Heart left ventricle (tissue), 16 donors: ENCODE measurements at regions of chr2 and their contacts with region 1.

Region 1: DNA sequence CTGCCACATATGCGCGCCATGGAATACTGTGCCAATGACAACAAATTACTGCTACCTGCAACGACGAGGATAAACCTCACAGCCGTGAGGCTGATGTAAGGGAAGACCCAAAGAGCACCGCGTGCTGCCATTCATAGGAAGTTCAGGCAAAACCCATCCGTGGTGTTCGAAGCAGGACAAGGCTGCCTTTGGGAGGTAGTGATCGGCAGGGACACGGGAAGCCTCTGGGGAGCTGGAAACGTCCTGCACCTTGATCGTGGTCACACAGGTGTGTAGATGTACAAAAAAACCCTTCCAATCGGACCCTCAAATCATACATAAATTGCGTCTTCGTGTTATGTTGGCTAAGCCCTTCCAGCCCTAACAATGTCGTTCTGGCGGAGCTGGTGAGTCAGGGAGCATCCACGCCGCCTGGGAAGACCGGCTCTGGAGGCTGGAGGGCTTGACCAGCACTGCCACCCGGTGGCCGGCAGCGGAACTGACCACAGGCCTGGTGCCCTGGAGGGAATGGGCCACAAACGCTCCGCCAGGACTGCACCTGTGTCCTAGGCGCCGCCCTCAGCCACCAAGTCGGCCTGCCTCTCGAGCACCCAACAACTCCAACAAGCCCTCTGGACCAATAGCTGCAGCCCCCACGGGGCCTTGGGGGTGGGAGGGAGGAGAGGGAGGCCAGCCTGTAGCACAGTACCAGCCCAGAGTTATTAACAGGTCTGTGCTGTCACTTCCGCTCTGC is 4.1 kb upstream of the NEURL3 start:
- DNase-seq: peak; percentile 86 to 94 (median 90)
- ATAC-seq: peak; percentile 81 to 93 (median 92)
- H3K4me3 ChIP-seq: no peak overlapping the region
- H3K27ac ChIP-seq: no peak overlapping the region
- H3K4me1 ChIP-seq: peaks cover 0 to 21% (median 14%) of the 10 kb centered on the region in 12 donors
- H3K27me3 ChIP-seq: no peaks in the 10 kb centered on the region
- CTCF ChIP-seq: peak; percentile 96 to 100 (median 98)
- POLR2A ChIP-seq: no peak

Region 2: GRCh38 chr2:96138179-96139145 is 370.8 kb before region 1 on chr2 and contains the start of gene ASTL:
- intact Hi-C with region 1: loop called in 9 of 10 experiments (anchors 5 to 10 kb)
- DNase-seq: peak in 3 of 5 donors; percentile 41 to 68 (median 47)
- ATAC-seq: peak; percentile 65 to 76 (median 68)
- H3K4me3 ChIP-seq: no peak within 1 kb of the TSS
- H3K27ac ChIP-seq: no peak within 1 kb of the TSS
- H3K4me1 ChIP-seq: peaks cover 0 to 9% (median 0%) of the 10 kb centered on the region in 12 donors
- H3K27me3 ChIP-seq: peaks cover 0 to 9% (median 0%) of the 10 kb centered on the region in 9 donors
- CTCF ChIP-seq: peak; percentile 38 to 61 (median 50)
- POLR2A ChIP-seq: no peak
- total RNA-seq, gene ASTL: not detected

Region 3: GRCh38 chr2:96305091-96305978 is 203.9 kb before region 1 on chr2 and contains the start of gene SNRNP200:
- intact Hi-C with region 1: loop called in 7 of 10 experiments (anchors 1 to 10 kb)
- DNase-seq: peak; percentile 88 to 94 (median 90)
- ATAC-seq: peak; percentile 96 to 100 (median 100)
- H3K4me3 ChIP-seq: peak within 1 kb of the TSS; percentile 66 to 98 (median 82)
- H3K27ac ChIP-seq: peak within 1 kb of the TSS; percentile 64 to 94 (median 89)
- H3K4me1 ChIP-seq: peaks cover 0 to 31% (median 19%) of the 10 kb centered on the region in 12 donors
- H3K27me3 ChIP-seq: no peaks in the 10 kb centered on the region
- CTCF ChIP-seq: no peak
- POLR2A ChIP-seq: peak in 1 of 2 donors; percentile 80
- total RNA-seq, gene SNRNP200: 54.6 to 85.5 (median 66.6) TPM

Region 4: DNA sequence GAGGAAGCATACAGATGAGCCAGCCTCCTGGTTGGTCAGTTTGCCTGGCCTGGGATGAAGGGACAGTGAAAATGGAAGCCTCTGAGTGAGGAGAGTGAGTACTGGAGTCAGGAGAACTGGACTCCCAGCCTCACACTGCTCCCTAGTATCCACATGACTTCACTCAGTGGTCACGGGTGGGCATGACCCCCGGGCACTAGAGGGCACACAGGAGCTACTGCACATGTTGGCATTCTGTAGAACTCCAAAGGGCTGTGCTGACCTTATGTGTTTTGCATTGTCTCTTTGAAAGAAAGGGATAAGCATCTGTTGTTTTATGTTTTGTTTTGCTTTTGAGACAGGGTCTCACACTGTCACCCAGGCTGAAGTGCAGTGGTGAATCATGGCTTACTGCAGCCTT is 150.0 kb before region 1 on chr2:
- intact Hi-C with region 1: loop called in 1 of 10 experiments (anchors 2 kb)
- DNase-seq: peak in 1 of 5 donors; percentile 52
- ATAC-seq: peak in 3 of 4 donors; percentile 57 to 64 (median 59)
- H3K4me3 ChIP-seq: no peak overlapping the region
- H3K27ac ChIP-seq: no peak overlapping the region
- H3K4me1 ChIP-seq: peaks cover 0 to 17% (median 2%) of the 10 kb centered on the region in 12 donors
- H3K27me3 ChIP-seq: no peaks in the 10 kb centered on the region
- CTCF ChIP-seq: peak in 7 of 12 donors; percentile 15 to 49 (median 29)
- POLR2A ChIP-seq: no peak

Region 5: GRCh38 chr2:96470636-96471035 is 38.6 kb before region 1 on chr2:
- intact Hi-C with region 1: loop called (anchors 1 to 5 kb)
- DNase-seq: peak; percentile 50 to 86 (median 57)
- ATAC-seq: peak; percentile 20 to 92 (median 90)
- H3K4me3 ChIP-seq: peak overlapping the region in 11 of 12 donors; percentile 22 to 51 (median 33)
- H3K27ac ChIP-seq: peak overlapping the region in 2 of 12 donors; percentile 6 to 18
- H3K4me1 ChIP-seq: peaks cover 0 to 8% (median 5%) of the 10 kb centered on the region in 12 donors
- H3K27me3 ChIP-seq: peaks cover 0 to 8% (median 0%) of the 10 kb centered on the region in 9 donors
- CTCF ChIP-seq: peak; percentile 50 to 77 (median 63)
- POLR2A ChIP-seq: no peak